ENCODE measurements at regions of chr10 and their contacts with region 1.

Region 1: DNA sequence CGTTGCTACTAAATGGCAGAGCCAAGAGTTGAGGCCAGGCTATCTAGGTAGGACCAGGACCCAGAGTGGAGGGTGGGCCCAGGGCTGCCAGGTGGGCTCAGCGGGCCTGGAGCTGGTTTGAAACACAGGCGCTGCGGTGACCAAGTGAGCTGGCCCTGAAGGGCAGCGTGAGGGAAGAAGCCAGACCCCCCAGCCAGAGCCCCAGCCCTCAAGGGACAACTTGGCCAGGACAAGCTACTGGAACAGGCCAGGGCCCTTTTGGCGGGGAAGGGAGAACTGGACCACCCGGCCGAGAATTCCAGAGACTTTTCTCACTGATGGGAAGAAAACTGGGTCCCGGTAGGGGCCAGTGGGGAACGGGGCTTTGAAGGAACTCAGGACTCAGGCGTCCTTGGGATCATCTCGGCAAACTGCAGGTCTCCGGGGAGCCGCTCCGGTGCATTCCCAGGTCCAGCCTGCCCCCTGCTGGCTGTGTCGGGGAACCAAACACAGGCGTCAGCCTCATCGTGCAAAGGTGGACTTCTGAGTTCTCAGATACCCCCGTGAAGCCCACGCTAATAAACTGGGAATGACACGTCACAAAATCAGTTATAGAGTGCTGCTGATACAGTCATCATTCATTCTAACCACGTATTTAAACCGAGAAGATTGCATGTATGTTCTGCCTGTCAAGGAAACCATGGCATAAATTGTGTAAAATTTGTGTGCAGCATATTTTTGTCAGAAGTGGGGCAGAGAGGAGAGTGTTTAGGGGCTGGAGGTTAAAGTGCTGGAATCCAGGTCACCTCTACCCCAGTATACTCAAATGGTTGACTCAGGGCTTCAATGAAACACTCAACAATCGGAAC is 76.0 kb upstream of the CPXM2 start:
- DNase-seq: no peak
- H3K4me3 ChIP-seq: no peak overlapping the region
- CTCF ChIP-seq: peak; percentile 91

Region 2: GRCh38 chr10:123573236-123574108 is 394.1 kb before region 1 on chr10:
- CTCF ChIA-PET with region 1: interaction called, 311 read pairs
- POLR2A ChIA-PET with region 1: interaction called, 3 read pairs
- DNase-seq: no peak
- H3K4me3 ChIP-seq: no peak overlapping the region
- CTCF ChIP-seq: peak; percentile 63

Region 3: GRCh38 chr10:123582084-123582989 is 385.3 kb before region 1 on chr10:
- CTCF ChIA-PET with region 1: interaction called, 311 read pairs
- POLR2A ChIA-PET with region 1: no interaction called
- DNase-seq: peak; percentile 19
- H3K4me3 ChIP-seq: no peak overlapping the region
- CTCF ChIP-seq: peak; percentile 90

Region 4: DNA sequence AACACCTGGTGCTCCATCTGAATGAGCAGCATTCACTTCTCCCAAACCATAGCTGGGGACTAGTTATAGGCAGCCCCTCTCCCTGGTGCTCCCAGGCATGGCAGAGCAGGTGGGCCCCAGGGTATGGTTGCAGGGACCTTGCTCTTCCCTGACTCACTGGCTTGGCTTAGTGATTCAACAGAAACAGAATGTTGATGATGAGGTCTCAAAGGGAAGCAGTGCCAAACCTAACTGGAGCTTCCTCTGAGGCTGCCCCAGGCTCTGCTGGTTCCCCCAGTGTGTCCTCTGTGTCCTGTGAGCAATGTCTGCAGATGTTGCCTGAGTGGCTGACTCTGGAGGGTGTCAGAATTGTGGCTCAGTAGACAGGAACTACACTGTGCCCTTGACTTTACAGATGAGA is 297.7 kb before region 1 on chr10:
- CTCF ChIA-PET with region 1: interaction called, 10 read pairs
- POLR2A ChIA-PET with region 1: no interaction called
- DNase-seq: no peak
- H3K4me3 ChIP-seq: no peak overlapping the region
- CTCF ChIP-seq: no peak

Measured in AG04449 (cell line).